Endothelial cell of umbilical vein (primary cell): ENCODE measurements at regions of chr21 and their contacts with region 1.

Region 1: DNA sequence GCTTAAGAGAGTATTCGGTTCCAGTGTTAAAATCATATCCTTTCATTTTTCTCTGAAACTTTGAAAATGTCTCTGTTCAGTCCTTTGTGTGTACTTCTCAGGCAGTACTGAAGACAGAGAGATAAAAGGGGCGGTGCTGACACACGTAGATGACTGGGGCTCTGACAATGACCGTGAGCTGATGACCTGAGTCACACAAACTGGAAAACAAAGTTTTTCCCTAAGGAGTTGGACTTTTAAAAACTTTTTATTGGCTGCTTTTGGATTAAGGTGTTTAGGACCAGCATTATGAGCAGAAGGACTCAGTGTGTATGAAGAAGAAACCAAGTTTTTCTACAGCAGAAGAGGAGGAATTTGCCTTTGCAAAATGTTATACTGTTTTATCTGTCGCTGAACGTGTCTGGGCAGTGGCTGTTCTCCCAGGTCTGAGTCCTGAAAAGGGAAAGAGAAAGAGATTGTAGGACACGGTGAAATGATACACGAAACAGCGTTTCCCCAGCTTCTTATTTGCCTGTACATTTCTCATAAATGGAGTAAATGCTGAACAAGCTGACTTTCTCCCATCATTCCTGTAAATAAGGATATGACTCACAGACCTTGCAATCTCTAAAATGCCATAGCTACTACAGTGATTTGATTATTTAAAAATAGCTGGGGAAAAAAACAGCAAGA is 51.5 kb downstream of the MAP3K7CL start:
- DNase-seq: peak; percentile 90
- H3K4me3 ChIP-seq: peak overlapping the region; percentile 11 to 73 (median 32)
- H3K27ac ChIP-seq: peak overlapping the region; percentile 99
- H3K4me1 ChIP-seq: peaks cover 31% of the 10 kb centered on the region
- H3K27me3 ChIP-seq: no peaks in the 10 kb centered on the region
- CTCF ChIP-seq: no peak
- POLR2A ChIP-seq: peak; percentile 40

Region 2: GRCh38 chr21:28308516-28308915 is 873.4 kb before region 1 on chr21:
- CTCF ChIA-PET with region 1: no interaction called
- POLR2A ChIA-PET with region 1: no interaction called
- dilution Hi-C with region 1: no loop called
- intact Hi-C with region 1: no loop called
- DNase-seq: no peak
- H3K4me3 ChIP-seq: no peak overlapping the region
- H3K27ac ChIP-seq: no peak overlapping the region
- H3K4me1 ChIP-seq: peaks cover 12% of the 10 kb centered on the region
- H3K27me3 ChIP-seq: no peaks in the 10 kb centered on the region
- CTCF ChIP-seq: no peak
- POLR2A ChIP-seq: no peak

Region 3: DNA sequence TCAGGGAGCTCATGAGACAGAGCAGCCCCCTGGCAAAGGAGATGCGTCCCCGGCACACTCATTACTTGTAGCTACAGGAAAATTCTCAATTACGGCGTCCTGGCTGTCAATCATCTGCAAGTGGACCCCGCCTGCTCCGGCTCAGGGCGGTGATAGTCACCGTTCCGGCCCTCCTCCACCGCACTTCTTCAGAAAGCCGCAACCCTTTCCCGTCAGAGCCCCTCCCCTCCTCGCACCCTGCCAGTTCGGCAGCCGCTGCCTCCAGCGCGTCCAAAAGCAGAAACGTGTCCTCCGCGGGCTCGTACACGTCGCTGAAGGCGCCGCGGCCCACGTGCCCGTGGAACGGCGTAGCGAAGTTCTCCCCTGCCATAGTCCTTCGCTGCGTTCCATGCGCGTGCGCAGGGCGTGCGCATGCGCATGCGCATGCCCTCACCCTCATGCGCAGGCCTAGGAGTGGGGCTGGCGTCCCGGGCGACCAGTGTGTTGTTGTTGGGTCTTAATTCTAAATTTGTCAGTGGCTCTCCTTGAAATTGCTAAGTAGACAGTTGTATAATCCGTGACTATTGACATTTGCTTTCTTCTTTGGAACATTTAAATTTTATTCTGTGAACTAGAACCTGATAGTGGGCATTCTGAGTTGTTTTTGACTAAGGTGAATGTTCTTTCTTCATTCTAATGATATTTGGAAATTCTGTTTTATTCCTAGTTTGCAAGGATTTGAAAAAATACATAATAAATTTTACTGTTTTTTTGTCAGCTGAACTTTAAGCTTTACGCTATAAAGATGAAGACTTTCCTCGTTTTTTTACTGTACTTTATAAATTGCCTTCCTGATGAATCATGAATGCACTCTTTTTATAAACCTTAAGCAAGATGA is 296.7 kb before region 1 on chr21:
- CTCF ChIA-PET with region 1: no interaction called
- POLR2A ChIA-PET with region 1: no interaction called
- dilution Hi-C with region 1: no loop called
- intact Hi-C with region 1: no loop called
- DNase-seq: peak; percentile 93
- H3K4me3 ChIP-seq: peak overlapping the region; percentile 42 to 84 (median 55)
- H3K27ac ChIP-seq: peak overlapping the region; percentile 48
- H3K4me1 ChIP-seq: peaks cover 6% of the 10 kb centered on the region
- H3K27me3 ChIP-seq: peaks cover 0 to 9% of the 10 kb centered on the region in 2 experiments
- CTCF ChIP-seq: no peak
- POLR2A ChIP-seq: peak; percentile 86

Region 4: DNA sequence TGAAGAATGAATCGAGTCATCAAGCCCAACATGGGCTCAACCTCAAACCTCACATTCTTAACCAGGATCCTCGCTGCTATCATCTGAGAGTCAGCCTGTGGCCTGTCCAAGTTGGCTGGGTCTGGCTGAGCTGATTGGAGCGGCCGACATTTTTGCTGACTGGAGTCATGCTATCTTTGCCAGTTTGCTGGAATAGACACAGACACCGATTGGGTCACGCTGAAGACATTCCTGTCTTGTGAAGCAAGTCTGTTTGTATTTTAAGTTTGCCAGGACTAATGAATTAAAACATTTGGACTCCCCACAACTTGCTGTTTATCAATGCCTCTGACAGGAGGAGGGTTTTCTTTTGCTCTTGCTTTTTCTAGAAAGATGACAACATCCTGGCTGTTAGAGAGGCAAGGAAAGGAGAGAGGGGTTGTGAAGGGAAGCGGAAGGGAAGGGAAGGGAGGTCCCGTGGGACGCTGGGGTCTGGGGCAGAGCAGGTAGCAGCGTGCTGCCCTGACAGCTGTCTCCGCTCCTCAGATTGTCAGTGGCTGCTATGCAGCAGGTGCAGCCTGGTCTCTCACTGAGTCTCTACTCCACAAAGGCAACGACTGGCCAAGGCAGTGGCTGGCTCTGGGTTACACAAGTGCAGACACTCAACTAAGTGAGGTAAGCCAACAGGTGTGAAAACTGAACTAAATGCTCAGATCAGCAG is 51.5 kb before region 1 on chr21 and contains the start of gene MAP3K7CL:
- CTCF ChIA-PET with region 1: no interaction called
- POLR2A ChIA-PET with region 1: no interaction called
- dilution Hi-C with region 1: no loop called
- intact Hi-C with region 1: no loop called
- DNase-seq: no peak
- H3K4me3 ChIP-seq: no peak within 1 kb of the TSS
- H3K27ac ChIP-seq: no peak within 1 kb of the TSS
- H3K4me1 ChIP-seq: no peaks in the 10 kb centered on the region
- H3K27me3 ChIP-seq: no peaks in the 10 kb centered on the region
- CTCF ChIP-seq: no peak
- POLR2A ChIP-seq: no peak
- total RNA-seq, gene MAP3K7CL: 8.1 and 10.9 TPM in 2 replicates

Region 5: DNA sequence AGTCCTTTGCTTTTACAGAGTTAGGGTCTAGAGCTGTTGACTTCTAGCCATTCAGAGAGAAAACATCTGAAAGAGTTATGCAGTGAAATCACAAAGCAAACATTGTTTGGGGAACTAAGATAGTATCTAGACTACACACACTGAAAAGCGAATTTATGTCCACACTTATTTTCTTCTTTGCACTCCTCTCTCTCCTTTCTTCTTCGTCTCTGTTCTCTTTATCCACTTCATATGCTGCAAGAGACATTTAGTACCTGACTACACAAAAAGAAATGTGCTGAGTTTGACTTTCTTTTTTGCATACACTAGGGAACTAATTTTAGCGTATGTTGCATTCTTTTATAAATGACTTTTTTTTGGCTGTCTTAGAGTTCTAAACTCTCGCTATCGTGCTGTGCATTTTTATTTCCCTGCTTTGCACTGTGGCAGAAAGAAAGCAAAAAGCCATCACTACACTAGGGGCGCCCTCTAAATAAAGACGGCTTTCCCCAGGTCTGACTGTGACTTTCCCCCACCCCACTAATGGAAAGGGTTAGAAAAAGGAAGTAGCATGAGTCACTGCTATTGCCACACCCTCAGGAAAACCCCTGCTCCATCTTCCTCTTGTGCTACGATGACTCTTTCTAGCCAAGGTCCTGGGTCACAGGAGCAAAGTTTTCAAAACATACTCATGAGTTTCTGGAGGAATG is 14.2 kb after region 1 on chr21:
- CTCF ChIA-PET with region 1: no interaction called
- POLR2A ChIA-PET with region 1: interaction called, 4 read pairs
- dilution Hi-C with region 1: no loop called
- intact Hi-C with region 1: loop called (anchors 2 kb)
- DNase-seq: peak; percentile 90
- H3K4me3 ChIP-seq: peak overlapping the region in 2 of 3 experiments; percentile 38 to 44
- H3K27ac ChIP-seq: peak overlapping the region; percentile 92
- H3K4me1 ChIP-seq: peaks cover 32% of the 10 kb centered on the region
- H3K27me3 ChIP-seq: no peaks in the 10 kb centered on the region
- CTCF ChIP-seq: peak; percentile 47 to 56
- POLR2A ChIP-seq: no peak

Region 6: GRCh38 chr21:29208682-29209059 is 26.7 kb after region 1 on chr21:
- CTCF ChIA-PET with region 1: interaction called, 5 read pairs
- POLR2A ChIA-PET with region 1: interaction called, 3 read pairs
- dilution Hi-C with region 1: no loop called
- intact Hi-C with region 1: loop called (anchors 1 kb)
- DNase-seq: peak; percentile 84
- H3K4me3 ChIP-seq: peak overlapping the region in 1 of 3 experiments; percentile 38
- H3K27ac ChIP-seq: peak overlapping the region; percentile 97
- H3K4me1 ChIP-seq: peaks cover 31% of the 10 kb centered on the region
- H3K27me3 ChIP-seq: no peaks in the 10 kb centered on the region
- CTCF ChIP-seq: no peak
- POLR2A ChIP-seq: no peak

Region 7: DNA sequence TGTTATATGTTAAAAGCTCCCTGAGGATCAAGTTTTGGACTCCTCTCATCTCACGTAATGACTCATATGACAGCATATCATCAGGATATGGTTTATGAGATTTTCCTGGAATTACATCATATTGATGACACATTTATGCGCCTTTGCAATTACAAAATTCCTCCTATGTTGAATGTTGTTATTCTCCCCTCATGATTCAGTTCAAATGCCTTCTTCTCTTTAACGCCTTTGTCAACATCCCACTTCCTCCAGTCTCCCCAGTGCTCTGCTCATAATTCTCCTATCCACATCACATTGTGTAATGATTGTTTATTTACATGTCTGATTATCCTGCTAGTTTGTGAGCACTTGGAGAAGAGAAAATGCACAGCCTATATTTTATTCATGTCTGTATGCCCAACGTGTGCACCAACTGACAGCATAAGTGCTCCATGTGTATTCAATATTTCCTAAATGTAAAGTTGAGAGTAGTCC is 35.9 kb after region 1 on chr21:
- CTCF ChIA-PET with region 1: no interaction called
- POLR2A ChIA-PET with region 1: no interaction called
- dilution Hi-C with region 1: no loop called
- intact Hi-C with region 1: loop called (anchors 1 kb)
- DNase-seq: peak; percentile 97
- H3K4me3 ChIP-seq: no peak overlapping the region
- H3K27ac ChIP-seq: peak overlapping the region; percentile 81
- H3K4me1 ChIP-seq: peaks cover 23% of the 10 kb centered on the region
- H3K27me3 ChIP-seq: no peaks in the 10 kb centered on the region
- CTCF ChIP-seq: no peak
- POLR2A ChIP-seq: peak; percentile 45